MCF 10A (cell line): ENCODE measurements at regions of chr10 and their contacts with region 1.

Region 1: GRCh38 chr10:61733358-61733940 is 70.7 kb downstream of the CABCOCO1 start:
- DNase-seq: peak; percentile 59
- H3K4me3 Mint-ChIP-seq: no peak overlapping the region
- H3K27ac Mint-ChIP-seq: no peak overlapping the region
- H3K4me1 Mint-ChIP-seq: no peaks in the 10 kb centered on the region
- H3K27me3 Mint-ChIP-seq: no peaks in the 10 kb centered on the region
- CTCF ChIP-seq: peak; percentile 58

Region 2: DNA sequence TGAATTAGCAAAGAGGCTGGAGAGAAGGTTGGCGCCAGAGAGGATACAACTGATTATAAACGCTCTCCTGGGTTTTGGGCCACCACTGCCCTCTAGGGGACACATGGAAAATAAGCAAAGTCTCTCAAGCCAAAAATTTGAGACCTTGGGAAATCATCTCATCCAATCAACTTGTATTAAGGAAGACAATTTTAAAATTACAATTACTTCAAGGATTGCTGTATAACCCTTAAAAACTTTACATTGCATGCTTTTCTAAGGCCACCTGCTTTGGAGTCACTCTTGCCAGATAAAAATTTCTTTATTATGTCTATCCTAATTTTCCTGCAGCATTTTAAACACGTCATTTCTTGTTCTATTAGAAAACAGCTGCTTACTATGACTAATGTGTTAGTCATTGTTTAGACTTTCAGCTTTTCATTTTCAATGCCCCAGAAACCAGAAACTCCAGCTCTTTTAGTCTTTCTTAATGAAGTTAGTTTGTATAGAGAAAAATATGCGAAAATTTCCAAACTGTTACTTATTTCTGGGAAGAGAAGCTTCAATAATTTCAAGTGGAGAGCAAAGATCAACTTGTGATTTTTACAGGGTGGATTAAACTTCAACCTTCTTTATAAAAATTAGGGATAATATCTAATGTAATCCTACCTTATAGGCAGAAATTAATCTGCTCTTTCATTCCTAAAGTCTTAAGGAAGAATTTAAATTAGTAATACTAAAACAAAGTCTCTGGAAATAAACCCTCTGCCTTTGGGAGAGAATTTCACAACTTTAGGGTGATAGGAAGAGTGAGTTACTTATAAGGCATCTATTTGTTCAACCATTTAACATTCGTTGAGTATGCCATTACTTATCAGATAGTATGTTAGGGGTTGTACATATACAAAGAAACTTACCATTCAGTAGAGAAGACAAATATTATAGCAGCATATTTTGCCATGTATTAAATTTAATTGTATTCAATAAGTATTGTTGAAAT is 768.9 kb before region 1 on chr10:
- CTCF ChIA-PET with region 1: no interaction called
- POLR2A ChIA-PET with region 1: no interaction called
- intact Hi-C with region 1: loop called (anchors 10 kb)
- DNase-seq: peak; percentile 90
- H3K4me3 Mint-ChIP-seq: peak overlapping the region; percentile 37
- H3K27ac Mint-ChIP-seq: peak overlapping the region; percentile 97
- H3K4me1 Mint-ChIP-seq: peaks cover 19% of the 10 kb centered on the region
- H3K27me3 Mint-ChIP-seq: no peaks in the 10 kb centered on the region
- CTCF ChIP-seq: peak; percentile 75

Region 3: GRCh38 chr10:61159253-61159652 is 574.2 kb before region 1 on chr10:
- CTCF ChIA-PET with region 1: no interaction called
- POLR2A ChIA-PET with region 1: interaction called, 3 read pairs
- intact Hi-C with region 1: loop called (anchors 5 kb)
- DNase-seq: peak; percentile 72
- H3K4me3 Mint-ChIP-seq: no peak overlapping the region
- H3K27ac Mint-ChIP-seq: peak overlapping the region; percentile 5
- H3K4me1 Mint-ChIP-seq: peaks cover 16% of the 10 kb centered on the region
- H3K27me3 Mint-ChIP-seq: no peaks in the 10 kb centered on the region
- CTCF ChIP-seq: no peak

Region 4: GRCh38 chr10:61475449-61475873 is 258.0 kb before region 1 on chr10:
- CTCF ChIA-PET with region 1: no interaction called
- POLR2A ChIA-PET with region 1: no interaction called
- intact Hi-C with region 1: loop called (anchors 10 kb)
- DNase-seq: peak; percentile 63
- H3K4me3 Mint-ChIP-seq: no peak overlapping the region
- H3K27ac Mint-ChIP-seq: no peak overlapping the region
- H3K4me1 Mint-ChIP-seq: peaks cover 18% of the 10 kb centered on the region
- H3K27me3 Mint-ChIP-seq: no peaks in the 10 kb centered on the region
- CTCF ChIP-seq: no peak

Region 5: DNA sequence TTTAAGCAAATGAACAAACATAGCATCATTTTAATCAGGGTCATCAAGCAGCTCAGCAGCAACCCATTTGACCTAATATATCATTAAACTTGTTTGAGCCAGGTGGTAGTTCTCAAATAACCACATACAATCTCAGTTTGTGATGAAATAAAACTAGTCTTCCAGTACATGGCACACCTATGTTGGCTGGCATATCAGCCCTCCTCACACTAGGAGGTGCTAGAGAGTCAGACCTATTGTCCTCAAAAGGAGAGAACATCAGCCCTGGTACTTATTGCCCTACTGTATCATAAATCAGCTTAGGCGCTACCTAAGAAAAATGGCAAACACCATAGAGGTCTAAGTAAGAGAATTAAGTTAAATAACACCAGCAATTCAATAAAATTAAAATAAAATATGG is 11.0 kb after region 1 on chr10:
- CTCF ChIA-PET with region 1: interaction called, 10 read pairs
- POLR2A ChIA-PET with region 1: interaction called, 4 read pairs
- intact Hi-C with region 1: no loop called
- DNase-seq: no peak
- H3K4me3 Mint-ChIP-seq: no peak overlapping the region
- H3K27ac Mint-ChIP-seq: no peak overlapping the region
- H3K4me1 Mint-ChIP-seq: peaks cover 11% of the 10 kb centered on the region
- H3K27me3 Mint-ChIP-seq: no peaks in the 10 kb centered on the region
- CTCF ChIP-seq: peak; percentile 25